Activated CD4-positive, alpha-beta T cell treated with anti-CD3 and anti-CD28 coated beads for 36 hours (primary cell): ENCODE measurements at regions of chr15 and their contacts with region 1.

Region 1: DNA sequence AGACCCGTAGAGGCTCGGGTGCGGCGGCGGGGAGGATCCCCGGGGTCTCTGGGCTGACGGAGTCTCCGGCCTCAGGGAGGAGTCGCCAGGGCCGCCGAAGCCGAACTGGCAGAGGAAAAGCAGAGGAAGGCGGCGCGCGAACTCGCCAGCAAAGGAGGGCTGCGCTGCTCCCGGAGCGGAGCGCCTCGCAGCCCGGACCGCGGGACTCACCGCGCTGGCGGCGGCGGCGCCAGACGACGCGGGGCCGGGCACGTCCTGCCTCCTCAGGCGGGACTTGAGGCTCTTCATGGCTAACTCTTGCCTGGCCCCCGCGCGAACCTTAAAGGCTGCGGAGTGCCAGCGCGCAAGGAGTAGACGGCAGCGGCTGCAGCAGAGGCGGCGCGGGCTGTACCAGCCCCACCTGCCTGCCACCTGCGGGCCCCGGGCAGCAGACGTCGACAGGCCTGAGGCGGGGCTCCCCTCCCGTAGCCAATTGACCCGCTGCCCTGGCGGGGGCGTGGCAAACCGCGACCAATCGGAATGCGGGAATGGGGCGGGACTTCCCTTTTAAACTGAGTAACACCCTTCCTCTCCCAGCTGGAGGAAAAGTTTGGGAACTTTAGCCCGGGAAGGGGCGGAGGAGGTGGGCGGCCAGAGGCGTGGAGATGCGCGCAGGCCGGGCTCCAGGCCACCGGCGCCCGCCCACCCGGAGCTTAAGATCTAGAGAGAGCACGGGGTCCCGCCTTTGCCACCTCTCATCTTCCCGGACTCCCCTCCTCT is at the start of gene UACA:
- DNase-seq: peak; percentile 91
- ATAC-seq: peak; percentile 98
- H3K4me3 Mint-ChIP-seq: peak within 1 kb of the TSS; percentile 77
- H3K27ac Mint-ChIP-seq: peak within 1 kb of the TSS; percentile 45
- H3K4me1 Mint-ChIP-seq: peaks cover 19% of the 10 kb centered on the region
- H3K27me3 Mint-ChIP-seq: peaks cover 27% of the 10 kb centered on the region
- total RNA-seq, gene UACA: 6.6 TPM

Region 2: DNA sequence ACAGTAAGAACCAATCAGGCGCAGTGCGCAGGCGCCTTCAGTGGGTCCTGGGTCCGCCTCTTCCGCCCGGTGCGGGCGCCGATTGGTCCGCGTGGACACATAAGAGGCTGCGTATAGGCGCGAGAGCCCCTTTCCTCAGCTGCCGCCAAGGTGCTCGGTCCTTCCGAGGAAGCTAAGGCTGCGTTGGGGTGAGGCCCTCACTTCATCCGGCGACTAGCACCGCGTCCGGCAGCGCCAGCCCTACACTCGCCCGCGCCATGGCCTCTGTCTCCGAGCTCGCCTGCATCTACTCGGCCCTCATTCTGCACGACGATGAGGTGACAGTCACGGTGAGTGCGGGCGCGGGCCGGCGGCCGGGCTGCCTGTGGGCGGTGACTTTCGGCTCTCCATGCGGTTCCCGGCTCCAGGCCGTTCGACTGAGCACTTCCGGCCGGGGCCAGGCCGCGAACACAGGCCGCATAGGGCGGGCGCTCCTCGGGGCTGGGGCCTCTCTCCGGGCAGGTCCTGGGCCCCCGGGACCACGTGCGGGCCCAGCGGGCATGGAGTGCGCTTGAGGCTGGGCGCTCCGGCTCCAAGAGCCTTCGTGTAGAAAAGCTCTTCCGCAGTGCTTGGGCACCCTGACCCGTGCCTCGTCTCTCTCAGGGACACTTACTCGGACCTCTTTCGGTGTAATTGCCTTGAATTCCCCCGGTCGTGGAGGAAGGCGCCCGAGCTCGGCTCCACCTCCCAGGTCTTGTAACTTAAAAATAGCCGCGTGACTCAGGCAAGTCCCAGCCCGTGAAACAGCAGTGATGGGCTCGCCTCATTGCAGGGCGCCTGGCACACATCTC is 1310.4 kb before region 1 on chr15 and contains the start of gene RPLP1:
- CTCF ChIA-PET with region 1: no interaction called
- POLR2A ChIA-PET with region 1: no interaction called
- intact Hi-C with region 1: loop called in 1 of 2 experiments (anchors 5 kb)
- DNase-seq: peak; percentile 97
- ATAC-seq: peak; percentile 94
- H3K4me3 Mint-ChIP-seq: peak within 1 kb of the TSS; percentile 91
- H3K27ac Mint-ChIP-seq: peak within 1 kb of the TSS; percentile 99
- H3K4me1 Mint-ChIP-seq: peaks cover 24% of the 10 kb centered on the region
- H3K27me3 Mint-ChIP-seq: no peaks in the 10 kb centered on the region
- total RNA-seq, gene RPLP1: 1,576 to 2,330 TPM

Region 3: GRCh38 chr15:70111203-70112073 is 651.9 kb before region 1 on chr15:
- CTCF ChIA-PET with region 1: no interaction called
- POLR2A ChIA-PET with region 1: no interaction called
- intact Hi-C with region 1: no loop called
- DNase-seq: no peak
- ATAC-seq: no peak
- H3K4me3 Mint-ChIP-seq: no peak overlapping the region
- H3K27ac Mint-ChIP-seq: no peak overlapping the region
- H3K4me1 Mint-ChIP-seq: no peaks in the 10 kb centered on the region
- H3K27me3 Mint-ChIP-seq: peaks cover 3% of the 10 kb centered on the region

Region 4: DNA sequence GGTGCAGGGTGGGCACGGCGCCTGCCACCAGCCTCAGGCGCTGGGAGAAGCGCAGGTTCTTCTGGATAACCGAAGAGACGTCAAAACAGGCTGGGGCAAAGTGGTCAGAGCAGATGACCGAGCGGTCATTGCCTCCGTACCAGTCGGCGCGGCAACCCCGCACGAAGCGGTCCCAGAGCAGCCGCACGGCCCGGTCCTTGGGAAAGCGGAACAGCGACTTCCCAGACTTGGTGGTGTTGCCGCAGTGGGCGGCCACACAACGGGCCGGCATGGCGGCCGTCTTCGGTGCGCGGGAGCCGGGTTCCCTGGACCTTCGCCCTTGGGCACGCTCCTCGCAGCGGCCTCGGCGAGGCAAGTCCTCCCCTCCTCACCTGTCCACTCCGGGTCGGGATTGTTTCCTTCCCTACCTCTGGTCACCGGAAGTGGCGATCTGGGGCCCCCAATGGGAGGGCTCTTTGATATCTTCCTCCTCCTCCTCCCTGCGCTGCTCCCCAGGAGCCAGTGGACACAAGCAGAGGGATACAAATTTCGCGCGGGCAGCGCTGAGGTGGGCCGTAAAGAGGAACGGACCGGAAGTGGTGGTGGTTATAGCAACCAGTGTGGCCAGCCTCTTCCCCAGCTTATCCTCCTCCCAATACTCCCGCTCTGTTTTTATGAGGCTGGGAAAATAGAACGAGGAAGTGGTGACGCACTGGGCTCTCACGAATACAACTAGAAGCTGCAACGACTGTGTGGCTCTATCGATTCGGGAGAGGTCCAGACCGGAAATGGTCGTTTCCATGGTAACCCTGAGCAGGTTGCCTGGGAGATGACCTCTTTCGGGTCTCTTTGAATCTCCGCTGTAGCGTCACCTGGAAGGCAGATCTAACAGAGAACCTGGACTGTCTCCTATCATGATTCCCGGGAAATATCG is 129.0 kb after region 1 on chr15 and contains the starts of genes LRRC49 and THAP10:
- CTCF ChIA-PET with region 1: no interaction called
- POLR2A ChIA-PET with region 1: no interaction called
- intact Hi-C with region 1: loop called in 1 of 2 experiments (anchors 1 kb)
- DNase-seq: peak; percentile 71
- ATAC-seq: peak; percentile 86
- H3K4me3 Mint-ChIP-seq: peak within 1 kb of the TSS; percentile 84
- H3K27ac Mint-ChIP-seq: peak within 1 kb of the TSS; percentile 70
- H3K4me1 Mint-ChIP-seq: peaks cover 9% of the 10 kb centered on the region
- H3K27me3 Mint-ChIP-seq: peaks cover 39% of the 10 kb centered on the region
- total RNA-seq, gene LRRC49: 0.14 to 0.62 TPM
- total RNA-seq, gene THAP10: 0.12 to 0.27 TPM

Region 5: GRCh38 chr15:72117486-72118399 is 1354.4 kb after region 1 on chr15 and contains the start of gene MYO9A:
- CTCF ChIA-PET with region 1: no interaction called
- POLR2A ChIA-PET with region 1: no interaction called
- intact Hi-C with region 1: loop called in 1 of 2 experiments (anchors 2 kb)
- DNase-seq: peak; percentile 100
- ATAC-seq: peak; percentile 73
- H3K4me3 Mint-ChIP-seq: peak within 1 kb of the TSS; percentile 98
- H3K27ac Mint-ChIP-seq: peak within 1 kb of the TSS; percentile 96
- H3K4me1 Mint-ChIP-seq: peaks cover 40% of the 10 kb centered on the region
- H3K27me3 Mint-ChIP-seq: no peaks in the 10 kb centered on the region
- total RNA-seq, gene MYO9A: 19.0 to 20.3 TPM